Colonic mucosa (tissue), 4 donors: ENCODE measurements at regions of chr6 and their contacts with region 1.

Region 1: GRCh38 chr6:152458648-152459644 is 178.2 kb downstream of the SYNE1 start:
- DNase-seq: no peak
- H3K4me3 ChIP-seq: no peak overlapping the region
- H3K27ac ChIP-seq: no peak overlapping the region
- H3K4me1 ChIP-seq: no peaks in the 10 kb centered on the region
- H3K27me3 ChIP-seq: no peaks in the 10 kb centered on the region
- CTCF ChIP-seq: no peak

Region 2: GRCh38 chr6:152351110-152351509 is 107.8 kb before region 1 on chr6:
- intact Hi-C with region 1: no loop called
- DNase-seq: no peak
- H3K4me3 ChIP-seq: no peak overlapping the region
- H3K27ac ChIP-seq: no peak overlapping the region
- H3K4me1 ChIP-seq: no peaks in the 10 kb centered on the region
- H3K27me3 ChIP-seq: no peaks in the 10 kb centered on the region
- CTCF ChIP-seq: no peak

Region 3: GRCh38 chr6:153392156-153392555 is 933.2 kb after region 1 on chr6:
- intact Hi-C with region 1: loop called (anchors 10 kb)
- DNase-seq: no peak
- H3K4me3 ChIP-seq: no peak overlapping the region
- H3K27ac ChIP-seq: no peak overlapping the region
- H3K4me1 ChIP-seq: no peaks in the 10 kb centered on the region
- H3K27me3 ChIP-seq: no peaks in the 10 kb centered on the region
- CTCF ChIP-seq: no peak